ENCODE measurements at regions of chr14 and their contacts with region 1.

Region 1: DNA sequence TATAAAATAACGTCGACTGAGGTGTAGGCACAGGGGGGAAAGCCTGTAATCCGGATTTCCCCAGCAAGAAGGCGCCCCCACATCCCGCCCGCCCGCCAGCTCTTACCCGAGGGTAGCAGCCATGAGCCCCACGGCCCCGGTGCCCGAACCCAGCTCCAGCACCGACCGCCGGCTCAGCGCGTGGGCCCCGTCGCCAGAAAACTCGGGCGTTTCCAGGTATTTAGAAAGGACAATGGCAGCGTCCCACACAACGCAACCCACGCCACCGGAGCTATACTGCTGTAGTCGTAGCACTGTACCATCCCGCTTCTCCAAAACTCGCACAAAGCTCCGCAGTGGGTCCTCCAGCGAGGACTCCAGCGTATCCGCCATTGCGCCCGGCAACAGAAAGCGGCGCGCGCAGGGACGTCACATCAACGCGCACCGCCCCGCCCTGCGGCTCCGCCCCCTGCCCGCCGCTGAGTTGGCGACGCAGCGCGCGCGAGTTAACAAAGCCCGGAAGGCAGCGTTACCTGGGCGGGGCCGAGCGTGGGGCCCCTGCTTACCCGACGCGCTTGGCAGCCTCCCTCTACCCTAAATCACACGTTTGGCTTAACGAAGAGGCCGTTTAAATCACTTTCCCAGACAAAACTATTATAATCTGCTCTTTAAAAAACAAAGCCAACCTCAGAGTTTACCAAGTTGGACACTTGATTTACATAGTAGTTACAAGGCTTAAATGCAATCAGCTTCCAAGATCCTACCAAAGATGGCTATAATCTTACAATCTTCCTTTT is at the start of gene VCPKMT:
- DNase-seq: peak; percentile 86 to 94 (median 88)
- ATAC-seq: peak; percentile 100
- H3K4me3 ChIP-seq: peak within 1 kb of the TSS; percentile 76
- H3K27ac ChIP-seq: peak within 1 kb of the TSS; percentile 70
- H3K4me1 ChIP-seq: peaks cover 4 to 6% of the 10 kb centered on the region in 2 experiments; a peak in 4 of 5 replicates
- H3K27me3 ChIP-seq: no peaks in the 10 kb centered on the region
- CTCF ChIP-seq: no peak
- EP300 ChIP-seq: no peak
- POLR2A ChIP-seq: peak; percentile 87
- RAD21 ChIP-seq: no peak; a peak in 1 of 4 replicates
- polyA plus RNA-seq, gene VCPKMT: 2.7 to 3.6 TPM

Region 2: GRCh38 chr14:50038398-50039119 is 77.8 kb before region 1 on chr14:
- CTCF ChIA-PET with region 1: no interaction called
- POLR2A ChIA-PET with region 1: no interaction called
- in situ Hi-C with region 1: no loop called
- intact Hi-C with region 1: no loop called
- DNase-seq: peak in 2 of 4 experiments; percentile 48 to 63
- ATAC-seq: peak; percentile 89
- H3K4me3 ChIP-seq: no peak overlapping the region
- H3K27ac ChIP-seq: peak overlapping the region; percentile 33; the same call in 2 of the 3 replicates
- H3K4me1 ChIP-seq: peaks cover 9 to 25% of the 10 kb centered on the region in 2 experiments
- H3K27me3 ChIP-seq: no peaks in the 10 kb centered on the region
- CTCF ChIP-seq: peak; percentile 29 to 53 (median 31); a peak in 2 of 6 replicates
- EP300 ChIP-seq: no peak
- POLR2A ChIP-seq: no peak
- RAD21 ChIP-seq: peak; percentile 45 to 57

Region 3: DNA sequence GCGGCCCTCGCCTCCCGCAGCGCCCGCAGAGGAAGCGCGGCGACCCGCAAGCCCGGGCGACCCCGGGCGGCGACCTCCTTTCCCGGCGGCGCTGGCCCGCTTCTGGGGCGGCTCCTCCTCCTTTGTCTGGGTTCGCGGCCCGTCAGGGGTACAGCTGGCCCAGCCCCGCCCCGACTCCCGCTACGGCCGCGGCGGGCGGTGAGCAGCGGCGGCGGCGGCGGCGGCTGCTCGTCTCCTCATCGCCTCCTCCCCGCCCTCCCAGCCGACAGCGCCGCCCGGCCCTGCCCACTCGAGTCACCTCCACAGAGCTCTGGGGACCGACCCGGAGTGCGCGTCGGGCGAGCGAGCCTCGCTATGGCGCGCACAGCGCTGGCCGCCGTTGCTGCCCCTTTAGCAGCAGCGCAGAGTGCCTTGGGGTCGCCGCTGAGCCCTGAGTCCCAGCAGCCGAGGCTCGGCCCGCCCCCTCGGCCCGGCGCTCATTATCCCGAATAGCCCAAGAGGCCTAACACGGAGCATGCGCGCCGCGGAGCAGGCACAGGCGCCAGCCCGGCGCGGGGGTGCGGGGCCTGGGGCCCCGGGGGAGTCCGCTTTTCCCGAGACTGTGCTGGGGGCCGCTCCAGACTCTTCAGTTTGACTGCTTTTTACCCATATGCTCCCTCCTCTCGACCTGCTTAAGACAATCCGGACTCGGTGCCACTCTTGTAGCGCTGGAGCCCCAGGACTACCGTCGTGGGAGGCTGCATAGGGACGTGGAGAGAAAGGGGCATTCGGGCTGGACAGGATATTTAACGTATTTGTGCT is 115.3 kb after region 1 on chr14 and contains the start of gene SOS2:
- CTCF ChIA-PET with region 1: no interaction called
- POLR2A ChIA-PET with region 1: no interaction called
- in situ Hi-C with region 1: no loop called
- intact Hi-C with region 1: loop called (anchors 10 kb)
- DNase-seq: peak; percentile 76 to 88 (median 80)
- ATAC-seq: peak; percentile 93
- H3K4me3 ChIP-seq: peak within 1 kb of the TSS; percentile 83
- H3K27ac ChIP-seq: peak within 1 kb of the TSS; percentile 75
- H3K4me1 ChIP-seq: peaks cover 6 to 11% of the 10 kb centered on the region in 2 experiments; a peak in 4 of 5 replicates
- H3K27me3 ChIP-seq: no peaks in the 10 kb centered on the region
- CTCF ChIP-seq: no peak
- EP300 ChIP-seq: no peak
- POLR2A ChIP-seq: peak; percentile 69
- RAD21 ChIP-seq: no peak
- polyA plus RNA-seq, gene SOS2: 2.2 to 3.0 TPM